ENCODE measurements at regions of chr22 and their contacts with region 1.

Region 1: GRCh38 chr22:45671768-45672563 is at the start of gene ATXN10:
- DNase-seq: peak; percentile 83
- ATAC-seq: peak; percentile 78
- H3K4me3 Mint-ChIP-seq: peak within 1 kb of the TSS; percentile 89
- H3K27ac Mint-ChIP-seq: peak within 1 kb of the TSS; percentile 87
- H3K4me1 Mint-ChIP-seq: peaks cover 33% of the 10 kb centered on the region
- H3K27me3 Mint-ChIP-seq: peaks cover 3% of the 10 kb centered on the region
- total RNA-seq, gene ATXN10: 87.1 to 101 TPM

Region 2: DNA sequence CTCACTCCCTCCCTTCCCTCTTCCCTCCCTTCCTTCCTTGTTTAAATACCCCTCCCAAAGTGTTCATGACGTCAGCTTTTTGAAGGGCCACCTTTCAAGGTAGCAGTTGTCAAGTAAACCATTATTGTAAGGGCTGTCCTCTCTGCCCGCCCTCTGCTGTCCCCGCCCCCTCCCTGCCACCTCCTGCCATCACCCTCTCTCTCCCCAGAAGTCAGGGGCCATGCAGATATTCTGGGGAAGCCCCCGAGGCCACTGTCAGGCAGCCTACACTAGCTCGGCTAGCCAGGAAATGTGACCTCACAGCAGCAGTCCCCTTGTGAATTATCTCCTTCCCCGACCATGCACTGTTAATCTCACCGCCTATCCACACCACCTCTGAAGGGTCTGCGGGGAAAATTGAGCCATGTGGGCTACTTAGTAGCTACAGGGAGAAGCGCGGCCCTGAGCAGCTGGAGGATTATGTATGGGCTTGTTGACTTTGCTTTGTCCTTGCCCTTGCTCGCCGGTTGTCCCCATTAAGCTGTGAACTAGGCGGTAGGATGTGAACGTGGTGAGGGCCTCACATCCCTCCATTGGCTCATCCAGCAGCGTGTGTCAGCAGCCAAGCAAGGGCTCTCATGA is 42.4 kb before region 1 on chr22:
- CTCF ChIA-PET with region 1: no interaction called
- POLR2A ChIA-PET with region 1: no interaction called
- intact Hi-C with region 1: no loop called
- DNase-seq: no peak
- ATAC-seq: no peak
- H3K4me3 Mint-ChIP-seq: no peak overlapping the region
- H3K27ac Mint-ChIP-seq: no peak overlapping the region
- H3K4me1 Mint-ChIP-seq: no peaks in the 10 kb centered on the region
- H3K27me3 Mint-ChIP-seq: peaks cover 24% of the 10 kb centered on the region

Region 3: GRCh38 chr22:45683248-45683647 is 11.3 kb after region 1 on chr22:
- CTCF ChIA-PET with region 1: no interaction called
- POLR2A ChIA-PET with region 1: no interaction called
- intact Hi-C with region 1: no loop called
- DNase-seq: no peak
- ATAC-seq: no peak
- H3K4me3 Mint-ChIP-seq: no peak overlapping the region
- H3K27ac Mint-ChIP-seq: no peak overlapping the region
- H3K4me1 Mint-ChIP-seq: peaks cover 27% of the 10 kb centered on the region
- H3K27me3 Mint-ChIP-seq: no peaks in the 10 kb centered on the region

Region 4: GRCh38 chr22:46335201-46336118 is 663.5 kb after region 1 on chr22 and contains the start of gene TRMU:
- CTCF ChIA-PET with region 1: no interaction called
- POLR2A ChIA-PET with region 1: no interaction called
- intact Hi-C with region 1: loop called in 1 of 2 experiments (anchors 1 kb)
- DNase-seq: peak; percentile 86
- ATAC-seq: peak; percentile 89
- H3K4me3 Mint-ChIP-seq: peak within 1 kb of the TSS; percentile 99
- H3K27ac Mint-ChIP-seq: peak within 1 kb of the TSS; percentile 94
- H3K4me1 Mint-ChIP-seq: peaks cover 35% of the 10 kb centered on the region
- H3K27me3 Mint-ChIP-seq: no peaks in the 10 kb centered on the region
- total RNA-seq, gene TRMU: 61.4 to 75.3 TPM

Measured in activated CD4-positive, alpha-beta T cell treated with anti-CD3 and anti-CD28 coated beads for 36 hours (primary cell).